Activated T-helper 1 cell treated with anti-CD3 and anti-CD28 coated beads, Interleukin-12 subunit alpha, Interleukin-12 subunit beta, Interleukin-2, Interleukin-4 antibody, amounts not matched to agents 30 ng/mL and 10 ng/mL and 1 ng/mL, durations not matched to agents 14 hours and 24 hours and 36 hours (primary cell): ENCODE measurements at regions of chr17 and their contacts with region 1.

Region 1: GRCh38 chr17:55433629-55434305 is 12.1 kb upstream of the MMD start:
- DNase-seq: no peak
- H3K4me3 Mint-ChIP-seq: no peak overlapping the region
- H3K27ac Mint-ChIP-seq: no peak overlapping the region
- H3K4me1 Mint-ChIP-seq: peaks cover 47% of the 10 kb centered on the region
- H3K27me3 Mint-ChIP-seq: peaks cover 3% of the 10 kb centered on the region

Region 2: GRCh38 chr17:55458977-55459376 is 25.2 kb after region 1 on chr17:
- intact Hi-C with region 1: loop called (anchors 2 kb)
- DNase-seq: peak; percentile 1
- H3K4me3 Mint-ChIP-seq: no peak overlapping the region
- H3K27ac Mint-ChIP-seq: no peak overlapping the region
- H3K4me1 Mint-ChIP-seq: peaks cover 18% of the 10 kb centered on the region
- H3K27me3 Mint-ChIP-seq: peaks cover 5% of the 10 kb centered on the region